ENCODE measurements at regions of chr17 and their contacts with region 1.

Region 1: DNA sequence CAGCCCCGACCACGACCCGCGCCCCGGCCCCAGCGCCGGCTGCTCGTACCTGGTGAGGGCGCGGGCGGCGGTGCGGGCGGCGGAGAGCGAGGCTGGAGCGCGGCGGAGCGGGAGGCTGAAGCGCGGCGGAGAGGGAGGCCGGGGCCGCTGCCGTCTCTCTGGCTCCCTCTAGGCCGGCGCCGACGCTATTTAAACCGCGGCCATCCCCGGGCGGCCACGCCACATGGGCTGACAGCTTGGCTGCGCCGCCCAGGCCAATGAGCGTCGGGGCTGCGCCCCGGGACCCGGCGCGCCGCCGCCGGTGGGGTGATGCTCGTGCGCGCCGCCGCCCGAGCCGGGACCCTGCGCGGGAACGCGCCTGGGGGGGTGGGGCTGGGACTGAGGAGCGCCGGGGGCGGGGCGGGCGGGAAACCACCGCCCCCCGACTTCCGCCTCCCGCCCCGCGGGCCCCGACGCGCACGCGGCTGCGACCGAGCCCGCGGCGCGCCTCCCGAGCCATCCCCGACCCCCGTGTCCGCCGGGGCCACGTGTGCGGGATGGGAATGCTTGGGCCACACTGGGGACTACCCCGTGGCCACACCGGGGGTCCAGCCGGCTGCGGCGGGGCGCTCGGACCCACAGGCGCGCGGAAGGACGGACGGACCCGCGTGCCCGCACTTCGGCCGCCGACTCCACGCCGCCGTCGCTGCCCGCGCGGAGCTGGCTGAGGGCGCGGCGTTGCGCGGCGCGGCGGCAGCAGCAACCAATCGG is at the start of gene FASN:
- DNase-seq: peak; percentile 91
- ATAC-seq: peak; percentile 41
- H3K4me3 ChIP-seq: peak within 1 kb of the TSS; percentile 72 to 96 (median 86)
- H3K27ac ChIP-seq: peak within 1 kb of the TSS; percentile 93
- H3K4me1 ChIP-seq: peaks cover 76% of the 10 kb centered on the region
- H3K27me3 ChIP-seq: no peaks in the 10 kb centered on the region; a peak in 1 of 5 replicates
- CTCF ChIP-seq: peak; percentile 84
- EP300 ChIP-seq: peak in 1 of 2 experiments; percentile 55; a peak in 2 of 4 replicates
- POLR2A ChIP-seq: peak in 1 of 2 experiments; percentile 96; a peak in 2 of 4 replicates
- RAD21 ChIP-seq: peak; percentile 76
- total RNA-seq, gene FASN: 101 and 192 TPM in 2 replicates

Region 2: GRCh38 chr17:81119223-81120148 is 978.8 kb before region 1 on chr17:
- CTCF ChIA-PET with region 1: no interaction called
- POLR2A ChIA-PET with region 1: no interaction called
- in situ Hi-C with region 1: no loop called
- intact Hi-C with region 1: no loop called
- DNase-seq: no peak
- ATAC-seq: no peak; the same call in 1 of the 3 replicates
- H3K4me3 ChIP-seq: no peak overlapping the region
- H3K27ac ChIP-seq: no peak overlapping the region
- H3K4me1 ChIP-seq: no peaks in the 10 kb centered on the region
- H3K27me3 ChIP-seq: no peaks in the 10 kb centered on the region
- CTCF ChIP-seq: no peak
- EP300 ChIP-seq: no peak
- POLR2A ChIP-seq: no peak
- RAD21 ChIP-seq: no peak

Region 3: GRCh38 chr17:81911277-81911961 is 186.8 kb before region 1 on chr17 and contains the start of gene PCYT2:
- CTCF ChIA-PET with region 1: no interaction called
- POLR2A ChIA-PET with region 1: no interaction called
- in situ Hi-C with region 1: no loop called
- intact Hi-C with region 1: no loop called
- DNase-seq: peak; percentile 87
- ATAC-seq: peak; percentile 72
- H3K4me3 ChIP-seq: peak within 1 kb of the TSS; percentile 68 to 99 (median 97)
- H3K27ac ChIP-seq: peak within 1 kb of the TSS; percentile 99
- H3K4me1 ChIP-seq: peaks cover 46% of the 10 kb centered on the region
- H3K27me3 ChIP-seq: no peaks in the 10 kb centered on the region; a peak in 1 of 5 replicates
- CTCF ChIP-seq: peak; percentile 47
- EP300 ChIP-seq: 0 out of 4 replicates have a peak, but pooled peaks of 1 of the 2 experiments have one; percentile 3
- POLR2A ChIP-seq: peak in 1 of 2 experiments; percentile 30; a peak in 1 of 4 replicates
- RAD21 ChIP-seq: no peak; the same call in 1 of the 2 replicates
- total RNA-seq, gene PCYT2: 240 and 297 TPM in 2 replicates

Region 4: GRCh38 chr17:81977211-81978027 is 120.8 kb before region 1 on chr17 and contains the start of gene ASPSCR1:
- CTCF ChIA-PET with region 1: no interaction called
- POLR2A ChIA-PET with region 1: no interaction called
- in situ Hi-C with region 1: no loop called
- intact Hi-C with region 1: loop called (anchors 10 kb)
- DNase-seq: peak; percentile 80
- ATAC-seq: peak; percentile 85
- H3K4me3 ChIP-seq: peak within 1 kb of the TSS; percentile 86 to 92 (median 87)
- H3K27ac ChIP-seq: peak within 1 kb of the TSS; percentile 85
- H3K4me1 ChIP-seq: peaks cover 56% of the 10 kb centered on the region
- H3K27me3 ChIP-seq: no peaks in the 10 kb centered on the region
- CTCF ChIP-seq: no peak; the same call in 1 of the 2 replicates
- EP300 ChIP-seq: peak; percentile 23 to 69; a peak in 3 of 4 replicates
- POLR2A ChIP-seq: peak; percentile 68 to 95
- RAD21 ChIP-seq: peak; percentile 81
- total RNA-seq, gene ASPSCR1: 221 and 314 TPM in 2 replicates

Region 5: DNA sequence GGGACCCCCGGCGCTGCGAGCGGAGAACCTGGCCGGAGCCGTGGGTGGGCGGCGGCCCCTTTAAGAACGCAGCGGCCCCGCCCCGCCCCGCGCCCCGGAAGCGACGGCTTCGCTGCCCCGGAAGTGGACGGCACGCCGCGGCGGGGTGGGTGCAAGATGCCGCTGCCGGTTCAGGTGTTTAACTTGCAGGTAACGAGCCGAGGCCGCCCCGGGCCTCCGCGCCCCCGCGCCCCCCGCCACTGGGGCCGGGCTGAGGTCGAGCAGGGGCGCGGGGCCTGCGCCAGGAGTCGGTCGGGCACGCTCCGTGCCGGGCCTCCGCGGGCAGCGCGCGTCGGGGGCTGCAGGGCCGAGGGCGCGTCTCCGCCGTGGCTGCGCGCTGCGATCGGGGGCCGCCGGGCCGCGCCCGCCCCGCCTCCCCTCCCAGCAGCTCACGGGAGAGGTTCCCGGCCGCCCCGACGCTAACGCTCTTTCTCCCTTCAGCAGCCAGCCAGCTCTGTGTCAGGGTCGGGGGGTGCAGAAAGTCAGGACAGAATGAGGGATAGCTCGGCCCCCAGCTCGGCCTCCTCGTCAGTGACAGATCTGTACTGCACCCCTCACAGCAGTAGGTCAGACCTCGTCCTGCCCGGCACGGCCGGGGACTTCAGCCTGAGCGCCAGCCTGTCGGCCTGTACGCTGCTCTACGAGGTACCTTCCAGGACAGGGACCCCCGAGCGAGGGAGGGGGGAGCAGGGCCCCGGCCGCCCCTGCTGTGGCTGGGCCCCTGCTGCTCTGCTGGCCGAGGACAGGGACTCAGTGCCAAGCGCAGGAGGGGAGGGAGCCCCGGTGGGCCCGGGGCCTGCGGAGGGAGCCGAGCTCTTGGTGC is 46.2 kb before region 1 on chr17 and contains the starts of genes GPS1 and RFNG:
- CTCF ChIA-PET with region 1: no interaction called
- POLR2A ChIA-PET with region 1: interaction called, 11 read pairs
- in situ Hi-C with region 1: no loop called
- intact Hi-C with region 1: loop called (anchors 5 kb)
- DNase-seq: peak; percentile 60
- ATAC-seq: peak; percentile 49
- H3K4me3 ChIP-seq: peak within 1 kb of the TSS; percentile 76 to 99 (median 95)
- H3K27ac ChIP-seq: peak within 1 kb of the TSS; percentile 71
- H3K4me1 ChIP-seq: peaks cover 50% of the 10 kb centered on the region
- H3K27me3 ChIP-seq: no peaks in the 10 kb centered on the region; a peak in 2 of 5 replicates
- CTCF ChIP-seq: no peak
- EP300 ChIP-seq: no peak
- POLR2A ChIP-seq: no peak
- RAD21 ChIP-seq: peak; percentile 54; the same call in 1 of the 2 replicates
- total RNA-seq, gene GPS1: 106 and 124 TPM in 2 replicates
- total RNA-seq, gene RFNG: 27.8 and 64.0 TPM in 2 replicates

Region 6: DNA sequence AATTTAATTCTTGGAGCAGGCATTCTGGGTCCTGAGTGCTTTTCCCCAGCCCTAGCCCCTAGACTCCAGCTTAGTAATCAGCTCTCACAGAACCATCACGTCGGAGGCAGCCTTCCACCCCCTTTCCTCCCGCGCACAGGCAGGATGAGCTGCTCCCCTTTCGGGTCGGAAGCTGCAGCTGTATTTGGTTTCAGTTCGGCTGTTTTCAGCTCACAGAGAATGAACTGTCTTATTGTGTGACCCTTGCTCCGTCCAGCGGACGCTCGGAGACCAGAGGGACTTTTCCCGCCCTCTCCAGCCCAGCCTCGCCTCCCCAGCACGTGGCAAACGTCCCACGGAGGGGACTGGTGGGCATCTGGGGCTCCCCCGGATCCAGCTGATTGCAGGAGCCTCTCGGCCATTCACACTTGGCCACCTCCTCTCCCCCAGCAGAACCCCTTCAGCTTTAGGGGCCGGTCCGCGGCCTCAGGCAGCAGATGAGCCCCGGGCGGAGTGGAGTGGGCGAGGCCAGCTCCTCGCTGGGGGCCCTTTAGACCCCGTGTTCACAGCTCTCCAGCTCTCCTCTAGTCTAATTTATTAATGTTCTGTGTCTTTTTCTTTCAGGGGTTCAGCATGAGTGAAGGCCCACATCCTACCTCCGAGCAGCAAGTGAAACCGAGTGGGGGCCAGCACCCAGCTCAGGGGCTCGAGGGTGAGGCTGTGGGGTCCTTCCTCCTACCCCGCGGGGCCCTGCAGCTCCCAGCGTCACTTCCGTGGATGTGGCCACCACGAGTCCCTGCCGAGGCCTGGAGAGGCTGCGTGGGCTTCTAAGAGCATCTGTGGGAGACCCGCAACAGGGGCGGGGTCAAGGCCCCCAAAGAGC is 272.5 kb after region 1 on chr17:
- CTCF ChIA-PET with region 1: no interaction called
- POLR2A ChIA-PET with region 1: no interaction called
- in situ Hi-C with region 1: no loop called
- intact Hi-C with region 1: no loop called
- DNase-seq: no peak
- ATAC-seq: peak; percentile 13; the same call in 2 of the 3 replicates
- H3K4me3 ChIP-seq: peak overlapping the region; percentile 17 to 59 (median 39); a peak in 5 of 6 replicates
- H3K27ac ChIP-seq: peak overlapping the region; percentile 47
- H3K4me1 ChIP-seq: peaks cover 73% of the 10 kb centered on the region
- H3K27me3 ChIP-seq: no peaks in the 10 kb centered on the region
- CTCF ChIP-seq: peak; percentile 50
- EP300 ChIP-seq: no peak
- POLR2A ChIP-seq: no peak
- RAD21 ChIP-seq: no peak

Measured in HepG2 (cell line).